ENCODE measurements at regions of chrX and their contacts with region 1.

Region 1: GRCh38 chrX:150683536-150684146 is 9.6 kb upstream of the MTMR1 start:
- DNase-seq: no peak
- H3K4me3 Mint-ChIP-seq: no peak overlapping the region
- H3K27ac Mint-ChIP-seq: no peak overlapping the region
- H3K4me1 Mint-ChIP-seq: peaks cover 11% of the 10 kb centered on the region
- H3K27me3 Mint-ChIP-seq: no peaks in the 10 kb centered on the region

Region 2: GRCh38 chrX:149950681-149951080 is 733.0 kb before region 1 on chrX:
- CTCF ChIA-PET with region 1: no interaction called
- intact Hi-C with region 1: loop called (anchors 2 kb)
- DNase-seq: peak; percentile 24
- H3K4me3 Mint-ChIP-seq: no peak overlapping the region
- H3K27ac Mint-ChIP-seq: no peak overlapping the region
- H3K4me1 Mint-ChIP-seq: no peaks in the 10 kb centered on the region
- H3K27me3 Mint-ChIP-seq: no peaks in the 10 kb centered on the region

Region 3: DNA sequence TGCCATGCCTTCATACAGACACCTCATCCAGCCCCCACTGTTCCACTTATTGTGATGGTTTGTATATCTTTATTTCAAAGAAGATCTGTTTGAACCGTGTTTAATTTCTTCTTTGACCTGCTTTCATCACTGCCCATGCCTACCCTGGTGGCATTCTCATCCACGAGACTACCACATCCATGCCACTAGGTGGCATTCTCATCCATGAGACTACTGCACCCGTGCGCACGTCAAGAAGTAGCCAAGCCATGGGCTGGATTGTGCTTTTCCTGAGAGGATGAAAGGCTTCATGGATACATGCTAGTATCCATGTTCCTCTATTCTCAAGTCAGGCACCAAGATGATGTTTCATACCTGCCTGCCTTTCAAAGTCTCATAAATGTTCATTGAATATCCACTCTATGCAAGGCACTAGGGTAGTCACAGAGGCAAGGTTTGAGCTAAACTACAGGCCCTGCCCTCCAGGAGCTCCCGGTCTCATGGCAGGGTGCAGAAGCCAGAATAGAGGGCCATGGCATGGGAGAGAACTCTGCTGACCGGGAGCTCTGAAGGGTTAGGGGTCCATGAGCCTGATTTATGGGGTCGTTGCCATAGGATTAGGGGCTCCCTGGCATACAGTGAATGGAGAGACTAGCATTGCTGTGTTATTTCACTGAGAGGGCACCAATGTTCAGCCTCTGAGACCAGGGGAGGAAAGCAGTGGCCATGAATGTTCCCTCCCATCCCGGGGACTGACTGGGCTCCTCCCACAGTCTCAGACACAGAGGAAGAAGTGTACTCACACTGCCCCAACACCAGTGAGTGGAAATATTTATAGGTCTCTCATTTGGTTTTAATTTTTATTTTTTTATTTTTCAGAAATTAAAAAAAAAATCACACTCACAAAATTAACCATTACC is 720.5 kb before region 1 on chrX:
- CTCF ChIA-PET with region 1: no interaction called
- intact Hi-C with region 1: loop called (anchors 2 kb)
- DNase-seq: peak; percentile 39
- H3K4me3 Mint-ChIP-seq: no peak overlapping the region
- H3K27ac Mint-ChIP-seq: no peak overlapping the region
- H3K4me1 Mint-ChIP-seq: peaks cover 2% of the 10 kb centered on the region
- H3K27me3 Mint-ChIP-seq: no peaks in the 10 kb centered on the region

Region 4: GRCh38 chrX:150449313-150449712 is 234.3 kb before region 1 on chrX:
- CTCF ChIA-PET with region 1: interaction called, 3 read pairs
- intact Hi-C with region 1: loop called (anchors 5 kb)
- DNase-seq: no peak
- H3K4me3 Mint-ChIP-seq: no peak overlapping the region
- H3K27ac Mint-ChIP-seq: no peak overlapping the region
- H3K4me1 Mint-ChIP-seq: peaks cover 13% of the 10 kb centered on the region
- H3K27me3 Mint-ChIP-seq: no peaks in the 10 kb centered on the region

Region 5: DNA sequence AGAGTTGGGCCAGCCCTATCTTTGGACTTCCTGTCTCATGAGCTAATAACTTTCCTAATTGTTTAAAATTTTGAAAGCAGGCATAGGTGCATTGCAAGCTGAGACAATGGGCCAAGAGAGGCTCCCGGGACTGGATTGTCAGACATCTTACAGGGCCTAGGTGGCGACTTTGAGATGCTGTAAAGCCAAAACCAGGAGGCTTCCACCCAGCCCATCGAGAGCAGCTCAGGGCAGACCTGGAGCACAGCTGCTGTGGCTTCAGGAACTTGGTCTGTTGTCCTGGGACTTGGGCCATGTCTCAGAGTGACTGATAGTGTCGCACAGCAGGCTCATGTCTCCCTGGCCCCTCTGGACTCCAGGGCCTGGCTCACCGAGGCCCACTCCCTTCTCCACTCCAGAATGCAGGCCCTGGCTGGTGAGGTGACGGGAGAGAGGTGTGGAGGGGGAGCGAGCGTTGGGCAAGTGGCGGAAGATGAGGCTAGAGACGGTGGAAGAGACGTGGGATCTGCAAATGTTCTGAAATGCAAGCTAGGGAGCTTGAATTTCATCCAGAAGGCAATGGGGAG is 139.3 kb before region 1 on chrX:
- CTCF ChIA-PET with region 1: no interaction called
- intact Hi-C with region 1: loop called (anchors 1 kb)
- DNase-seq: peak; percentile 44
- H3K4me3 Mint-ChIP-seq: no peak overlapping the region
- H3K27ac Mint-ChIP-seq: no peak overlapping the region
- H3K4me1 Mint-ChIP-seq: peaks cover 17% of the 10 kb centered on the region
- H3K27me3 Mint-ChIP-seq: no peaks in the 10 kb centered on the region

Region 6: GRCh38 chrX:150715184-150715583 is 31.5 kb after region 1 on chrX:
- CTCF ChIA-PET with region 1: interaction called, 23 read pairs
- intact Hi-C with region 1: loop called (anchors 1 kb)
- DNase-seq: no peak
- H3K4me3 Mint-ChIP-seq: no peak overlapping the region
- H3K27ac Mint-ChIP-seq: no peak overlapping the region
- H3K4me1 Mint-ChIP-seq: peaks cover 35% of the 10 kb centered on the region
- H3K27me3 Mint-ChIP-seq: no peaks in the 10 kb centered on the region

Measured in activated naive CD4-positive, alpha-beta T cell treated with anti-CD3 and anti-CD28 coated beads for 36 hours (primary cell).